PC-9 (cell line): ENCODE measurements at regions of chr4 and their contacts with region 1.

Region 1: GRCh38 chr4:167745024-167745687 is 347.2 kb upstream of the ANXA10 start:
- DNase-seq: no peak
- H3K4me3 ChIP-seq: no peak overlapping the region
- H3K27ac ChIP-seq: no peak overlapping the region
- H3K4me1 ChIP-seq: no peaks in the 10 kb centered on the region
- H3K27me3 ChIP-seq: no peaks in the 10 kb centered on the region
- CTCF ChIP-seq: no peak

Region 2: GRCh38 chr4:167767281-167767680 is 22.1 kb after region 1 on chr4:
- CTCF ChIA-PET with region 1: no interaction called
- POLR2A ChIA-PET with region 1: no interaction called
- intact Hi-C with region 1: loop called (anchors 2 kb)
- DNase-seq: no peak
- H3K4me3 ChIP-seq: no peak overlapping the region
- H3K27ac ChIP-seq: no peak overlapping the region
- H3K4me1 ChIP-seq: no peaks in the 10 kb centered on the region
- H3K27me3 ChIP-seq: no peaks in the 10 kb centered on the region
- CTCF ChIP-seq: no peak

Region 3: DNA sequence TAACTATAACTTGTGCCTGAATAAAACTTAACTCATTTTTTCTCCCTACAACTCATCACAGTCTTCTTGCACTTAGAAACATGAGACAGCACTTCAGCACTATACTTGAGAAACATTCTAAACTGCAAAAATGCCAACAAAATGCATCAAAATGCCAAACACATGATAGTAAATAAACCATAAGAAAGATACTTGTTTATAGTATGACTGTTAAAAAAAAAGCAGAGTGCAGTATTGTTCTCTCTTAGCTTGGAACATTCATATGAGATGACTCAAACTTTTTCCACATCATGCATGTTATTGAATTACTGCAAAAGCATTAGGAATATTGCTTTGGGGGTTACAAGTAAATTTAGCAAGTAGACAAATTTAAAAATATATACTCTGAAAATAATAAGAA is 211.5 kb after region 1 on chr4:
- CTCF ChIA-PET with region 1: no interaction called
- POLR2A ChIA-PET with region 1: no interaction called
- intact Hi-C with region 1: no loop called
- DNase-seq: no peak
- H3K4me3 ChIP-seq: no peak overlapping the region
- H3K27ac ChIP-seq: no peak overlapping the region
- H3K4me1 ChIP-seq: no peaks in the 10 kb centered on the region
- H3K27me3 ChIP-seq: no peaks in the 10 kb centered on the region
- CTCF ChIP-seq: no peak